ENCODE measurements at regions of chr1 and their contacts with region 1.

Region 1: GRCh38 chr1:7070389-7071029 is 285.3 kb downstream of the CAMTA1 start:
- DNase-seq: peak; percentile 56
- ATAC-seq: peak; percentile 47
- H3K4me3 ChIP-seq: no peak overlapping the region
- H3K4me3 Mint-ChIP-seq: peak overlapping the region; percentile 36
- H3K27ac ChIP-seq: no peak overlapping the region
- H3K27ac Mint-ChIP-seq: no peak overlapping the region
- H3K4me1 ChIP-seq: peaks cover 0 to 4% of the 10 kb centered on the region in 2 donors
- H3K4me1 Mint-ChIP-seq: peaks cover 7% of the 10 kb centered on the region
- H3K27me3 ChIP-seq: peaks cover 0 to 7% (median 1%) of the 10 kb centered on the region in 4 experiments
- H3K27me3 Mint-ChIP-seq: peaks cover 31% of the 10 kb centered on the region
- CTCF ChIP-seq: peak; percentile 84

Region 2: DNA sequence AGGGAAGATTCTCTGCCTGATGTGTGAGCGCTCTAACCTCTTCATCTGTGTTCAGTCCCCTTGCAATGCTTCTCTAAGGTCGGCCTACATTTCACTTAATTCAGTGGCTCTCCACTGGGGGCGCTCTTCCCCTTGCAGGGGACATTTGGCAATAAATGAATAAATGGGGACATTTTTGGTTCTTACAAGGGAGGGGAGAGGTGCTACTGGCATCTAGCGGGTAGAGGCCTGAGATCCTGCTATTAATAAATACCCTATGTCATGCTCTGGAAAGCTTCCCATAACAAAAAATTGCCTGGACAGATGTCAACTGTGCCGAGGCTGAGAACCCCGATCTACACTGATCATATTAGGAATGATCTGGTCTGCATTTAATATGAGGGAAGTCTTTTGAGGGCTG is 343.0 kb before region 1 on chr1:
- CTCF ChIA-PET with region 1: interaction called, 84 read pairs
- POLR2A ChIA-PET with region 1: no interaction called
- intact Hi-C with region 1: no loop called
- DNase-seq: peak; percentile 63
- ATAC-seq: peak; percentile 49
- H3K4me3 ChIP-seq: no peak overlapping the region
- H3K4me3 Mint-ChIP-seq: no peak overlapping the region
- H3K27ac ChIP-seq: no peak overlapping the region
- H3K27ac Mint-ChIP-seq: no peak overlapping the region
- H3K4me1 ChIP-seq: no peaks in the 10 kb centered on the region
- H3K4me1 Mint-ChIP-seq: no peaks in the 10 kb centered on the region
- H3K27me3 ChIP-seq: peaks cover 0 to 2% (median 0%) of the 10 kb centered on the region in 4 experiments
- H3K27me3 Mint-ChIP-seq: peaks cover 3% of the 10 kb centered on the region
- CTCF ChIP-seq: peak; percentile 96

Region 3: GRCh38 chr1:6794164-6794563 is 276.3 kb before region 1 on chr1:
- CTCF ChIA-PET with region 1: interaction called, 17 read pairs
- POLR2A ChIA-PET with region 1: no interaction called
- intact Hi-C with region 1: no loop called
- DNase-seq: peak; percentile 43
- ATAC-seq: no peak
- H3K4me3 ChIP-seq: no peak overlapping the region
- H3K4me3 Mint-ChIP-seq: no peak overlapping the region
- H3K27ac ChIP-seq: no peak overlapping the region
- H3K27ac Mint-ChIP-seq: no peak overlapping the region
- H3K4me1 ChIP-seq: no peaks in the 10 kb centered on the region
- H3K4me1 Mint-ChIP-seq: peaks cover 10% of the 10 kb centered on the region
- H3K27me3 ChIP-seq: no peaks in the 10 kb centered on the region
- H3K27me3 Mint-ChIP-seq: no peaks in the 10 kb centered on the region
- CTCF ChIP-seq: peak; percentile 57

Region 4: GRCh38 chr1:6822530-6823359 is 247.8 kb before region 1 on chr1:
- CTCF ChIA-PET with region 1: no interaction called
- POLR2A ChIA-PET with region 1: no interaction called
- intact Hi-C with region 1: no loop called
- DNase-seq: no peak
- ATAC-seq: no peak
- H3K4me3 ChIP-seq: no peak overlapping the region
- H3K4me3 Mint-ChIP-seq: no peak overlapping the region
- H3K27ac ChIP-seq: no peak overlapping the region
- H3K27ac Mint-ChIP-seq: no peak overlapping the region
- H3K4me1 ChIP-seq: peaks cover 12 to 17% of the 10 kb centered on the region in 2 donors
- H3K4me1 Mint-ChIP-seq: peaks cover 44% of the 10 kb centered on the region
- H3K27me3 ChIP-seq: no peaks in the 10 kb centered on the region
- H3K27me3 Mint-ChIP-seq: no peaks in the 10 kb centered on the region
- CTCF ChIP-seq: no peak

Region 5: DNA sequence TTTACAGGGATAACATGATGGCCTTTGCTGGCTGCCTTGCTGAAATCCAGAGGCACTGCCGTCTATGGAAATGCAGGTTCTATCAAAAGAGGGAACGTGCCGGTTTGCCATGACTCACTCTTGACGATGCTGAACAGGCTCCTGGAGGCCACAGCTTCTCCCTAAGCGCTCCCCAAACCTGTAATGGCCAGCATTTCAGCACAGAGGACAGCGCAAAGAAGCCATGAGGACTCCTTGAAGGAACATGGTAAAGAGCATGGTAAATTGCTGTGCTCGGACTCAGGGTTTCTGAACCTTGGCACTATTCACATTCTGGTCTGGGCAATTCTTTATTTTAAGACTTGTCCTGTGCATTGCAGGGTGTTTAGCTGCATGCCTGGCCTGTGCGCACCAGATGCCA is 67.8 kb before region 1 on chr1:
- CTCF ChIA-PET with region 1: no interaction called
- POLR2A ChIA-PET with region 1: no interaction called
- intact Hi-C with region 1: no loop called
- DNase-seq: no peak
- ATAC-seq: no peak
- H3K4me3 ChIP-seq: no peak overlapping the region
- H3K4me3 Mint-ChIP-seq: no peak overlapping the region
- H3K27ac ChIP-seq: no peak overlapping the region
- H3K27ac Mint-ChIP-seq: no peak overlapping the region
- H3K4me1 ChIP-seq: no peaks in the 10 kb centered on the region
- H3K4me1 Mint-ChIP-seq: no peaks in the 10 kb centered on the region
- H3K27me3 ChIP-seq: no peaks in the 10 kb centered on the region
- H3K27me3 Mint-ChIP-seq: peaks cover 24% of the 10 kb centered on the region
- CTCF ChIP-seq: no peak

Measured in B cell (primary cell).